Activated naive CD8-positive, alpha-beta T cell treated with anti-CD3 and anti-CD28 coated beads, Interleukin-2, amount 10 ng/mL, durations not matched to agents 7 days and 5 days (primary cell): ENCODE measurements at regions of chr7 and their contacts with region 1.

Region 1: GRCh38 chr7:148698397-148699023 is at the start of gene CUL1:
- DNase-seq: peak; percentile 85
- ATAC-seq: peak; percentile 79
- H3K4me3 Mint-ChIP-seq: peak within 1 kb of the TSS; percentile 91
- H3K27ac Mint-ChIP-seq: peak within 1 kb of the TSS; percentile 90
- H3K4me1 Mint-ChIP-seq: peaks cover 36% of the 10 kb centered on the region
- H3K27me3 Mint-ChIP-seq: peaks cover 5% of the 10 kb centered on the region
- total RNA-seq, gene CUL1: 53.1 to 53.8 TPM

Region 2: GRCh38 chr7:148722340-148723165 is 24.0 kb after region 1 on chr7:
- POLR2A ChIA-PET with region 1: interaction called, 10 read pairs
- DNase-seq: no peak
- ATAC-seq: peak; percentile 67
- H3K4me3 Mint-ChIP-seq: peak overlapping the region; percentile 37
- H3K27ac Mint-ChIP-seq: peak overlapping the region; percentile 49
- H3K4me1 Mint-ChIP-seq: peaks cover 56% of the 10 kb centered on the region
- H3K27me3 Mint-ChIP-seq: no peaks in the 10 kb centered on the region

Region 3: DNA sequence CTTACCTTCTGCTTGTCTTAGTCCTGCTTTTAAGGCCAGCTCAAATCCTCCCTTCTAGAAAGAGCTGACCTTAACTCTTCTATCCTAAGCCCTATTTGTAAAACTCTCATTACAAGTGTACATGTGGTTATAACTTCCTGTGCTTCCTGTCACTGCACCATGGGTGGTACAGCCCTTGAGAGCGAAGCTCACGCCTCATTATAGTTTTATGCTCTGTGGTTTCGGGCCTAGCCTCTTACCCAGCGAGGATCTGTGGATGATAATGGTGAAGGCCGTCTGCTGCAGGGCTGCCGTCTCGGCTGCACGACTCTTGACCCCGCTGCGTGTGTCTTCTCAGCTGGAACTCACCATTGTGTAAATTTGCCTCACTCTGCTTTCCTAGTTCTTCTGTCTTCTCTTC is 74.8 kb after region 1 on chr7:
- POLR2A ChIA-PET with region 1: interaction called, 12 read pairs
- DNase-seq: peak; percentile 49
- ATAC-seq: peak; percentile 100
- H3K4me3 Mint-ChIP-seq: peak overlapping the region; percentile 72
- H3K27ac Mint-ChIP-seq: peak overlapping the region; percentile 92
- H3K4me1 Mint-ChIP-seq: peaks cover 25% of the 10 kb centered on the region
- H3K27me3 Mint-ChIP-seq: no peaks in the 10 kb centered on the region